Activated CD4-positive, alpha-beta T cell treated with anti-CD3 and anti-CD28 coated beads for 36 hours (primary cell): ENCODE measurements at regions of chr16 and their contacts with region 1.

Region 1: GRCh38 chr16:70380861-70381603 is 34.3 kb downstream of the DDX19A start:
- DNase-seq: peak; percentile 98
- ATAC-seq: peak; percentile 93
- H3K4me3 Mint-ChIP-seq: peak overlapping the region; percentile 86
- H3K27ac Mint-ChIP-seq: peak overlapping the region; percentile 91
- H3K4me1 Mint-ChIP-seq: peaks cover 12% of the 10 kb centered on the region
- H3K27me3 Mint-ChIP-seq: no peaks in the 10 kb centered on the region

Region 2: DNA sequence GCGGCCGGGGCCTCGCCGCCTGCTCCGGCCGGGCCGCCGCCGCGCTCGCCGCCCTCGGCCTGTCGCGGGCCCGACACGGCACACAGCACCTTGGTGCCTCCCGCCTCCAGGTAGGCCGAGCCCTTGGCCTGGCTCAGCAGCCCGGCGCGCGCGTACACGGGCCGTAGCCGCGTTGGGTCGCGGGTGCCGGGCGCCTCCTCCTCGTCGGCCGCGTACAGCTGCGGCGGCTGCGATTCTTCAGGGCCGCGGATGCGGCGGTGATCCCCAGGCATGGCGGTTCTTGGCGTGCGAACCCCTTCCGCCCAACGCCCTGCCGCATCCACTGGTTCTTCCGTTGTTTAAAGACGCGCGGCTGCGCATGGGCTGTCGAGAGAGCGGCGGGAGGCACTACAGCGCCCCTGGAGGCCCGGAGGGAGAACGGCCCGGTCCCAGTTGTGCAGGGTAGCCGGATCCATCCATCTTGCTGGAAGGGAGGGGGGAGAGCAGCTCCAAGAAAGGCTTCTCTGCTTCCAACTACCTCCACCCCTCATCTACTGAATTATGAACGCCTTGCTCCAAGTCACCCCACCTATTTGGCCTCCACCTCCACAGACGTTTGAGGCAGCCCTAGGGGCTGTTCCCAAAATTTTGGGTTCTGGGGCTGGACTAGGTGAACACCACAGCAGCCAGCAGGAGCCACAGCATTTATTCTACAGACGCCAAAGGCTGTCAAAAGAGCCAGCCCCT is 129.2 kb before region 1 on chr16 and contains the start of gene EXOSC6:
- CTCF ChIA-PET with region 1: no interaction called
- POLR2A ChIA-PET with region 1: no interaction called
- intact Hi-C with region 1: loop called in 1 of 2 experiments (anchors 1 kb)
- DNase-seq: peak; percentile 96
- ATAC-seq: peak; percentile 94
- H3K4me3 Mint-ChIP-seq: peak within 1 kb of the TSS; percentile 85
- H3K27ac Mint-ChIP-seq: peak within 1 kb of the TSS; percentile 84
- H3K4me1 Mint-ChIP-seq: peaks cover 16% of the 10 kb centered on the region
- H3K27me3 Mint-ChIP-seq: no peaks in the 10 kb centered on the region
- total RNA-seq, gene EXOSC6: 18.7 to 23.5 TPM

Region 3: DNA sequence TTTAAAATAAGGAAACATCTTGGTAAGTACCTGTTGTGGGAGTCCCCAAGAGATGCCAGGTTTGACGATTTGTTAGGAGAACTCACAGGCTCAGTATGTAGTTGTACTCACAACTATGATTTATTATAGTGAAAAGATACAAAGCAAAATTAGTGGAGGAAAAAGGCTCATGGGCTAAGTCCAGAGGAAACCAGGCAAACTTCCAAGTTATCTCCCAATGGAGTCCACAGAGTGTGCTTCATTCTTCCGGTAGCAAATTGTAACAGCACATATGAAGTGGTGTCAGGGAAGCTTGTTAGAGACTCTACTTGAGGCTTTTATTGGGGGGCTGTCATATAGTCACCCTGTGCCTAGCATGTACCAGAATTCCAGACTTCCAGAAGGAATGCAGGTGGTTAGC is 32.0 kb before region 1 on chr16:
- CTCF ChIA-PET with region 1: no interaction called
- POLR2A ChIA-PET with region 1: interaction called, 27 read pairs
- intact Hi-C with region 1: loop called (anchors 1 kb)
- DNase-seq: no peak
- ATAC-seq: no peak
- H3K4me3 Mint-ChIP-seq: no peak overlapping the region
- H3K27ac Mint-ChIP-seq: no peak overlapping the region
- H3K4me1 Mint-ChIP-seq: peaks cover 36% of the 10 kb centered on the region
- H3K27me3 Mint-ChIP-seq: no peaks in the 10 kb centered on the region

Region 4: DNA sequence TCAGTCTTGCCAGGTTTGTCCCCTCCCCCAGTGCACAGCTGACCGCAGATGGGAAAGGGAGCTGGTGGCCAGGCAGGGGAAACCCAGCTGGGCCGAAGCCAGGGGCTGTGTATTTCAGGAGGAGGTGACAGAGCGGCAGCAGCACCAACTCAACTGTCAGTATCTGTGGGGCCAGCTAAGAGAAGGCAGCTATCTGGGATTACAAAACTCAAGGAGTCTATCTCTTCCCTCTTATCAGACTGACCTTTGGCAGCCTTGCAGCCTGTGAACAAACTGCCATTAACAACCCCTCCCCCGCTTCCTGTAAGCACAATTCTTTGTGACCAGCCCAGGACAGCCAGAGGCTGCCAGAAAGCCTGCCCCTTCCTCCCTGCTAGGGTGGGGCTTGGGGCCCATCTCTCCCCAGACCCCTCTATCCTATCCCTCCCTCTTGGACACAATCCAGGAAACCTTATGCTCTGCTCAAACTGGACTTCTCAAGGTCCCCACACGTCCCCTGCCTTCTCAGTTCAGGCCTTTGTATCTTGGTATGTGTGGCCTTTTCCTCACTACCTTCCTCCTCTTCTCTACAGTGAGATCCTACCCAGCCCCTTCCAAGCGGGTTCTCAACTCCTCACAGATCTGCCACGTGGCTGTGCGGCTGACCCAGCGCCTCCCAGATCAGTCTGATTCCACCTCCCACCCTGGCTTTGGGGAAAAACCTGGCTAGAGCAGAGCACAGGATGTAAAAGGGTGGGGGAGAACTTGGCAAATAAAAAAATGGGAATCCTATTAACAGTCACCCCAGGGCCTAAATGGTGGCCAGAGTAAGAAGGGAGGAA is 47.4 kb after region 1 on chr16:
- CTCF ChIA-PET with region 1: no interaction called
- POLR2A ChIA-PET with region 1: interaction called, 5 read pairs
- intact Hi-C with region 1: loop called in 1 of 2 experiments (anchors 2 kb)
- DNase-seq: peak; percentile 85
- ATAC-seq: peak; percentile 63
- H3K4me3 Mint-ChIP-seq: no peak overlapping the region
- H3K27ac Mint-ChIP-seq: peak overlapping the region; percentile 90
- H3K4me1 Mint-ChIP-seq: peaks cover 57% of the 10 kb centered on the region
- H3K27me3 Mint-ChIP-seq: no peaks in the 10 kb centered on the region

Region 5: DNA sequence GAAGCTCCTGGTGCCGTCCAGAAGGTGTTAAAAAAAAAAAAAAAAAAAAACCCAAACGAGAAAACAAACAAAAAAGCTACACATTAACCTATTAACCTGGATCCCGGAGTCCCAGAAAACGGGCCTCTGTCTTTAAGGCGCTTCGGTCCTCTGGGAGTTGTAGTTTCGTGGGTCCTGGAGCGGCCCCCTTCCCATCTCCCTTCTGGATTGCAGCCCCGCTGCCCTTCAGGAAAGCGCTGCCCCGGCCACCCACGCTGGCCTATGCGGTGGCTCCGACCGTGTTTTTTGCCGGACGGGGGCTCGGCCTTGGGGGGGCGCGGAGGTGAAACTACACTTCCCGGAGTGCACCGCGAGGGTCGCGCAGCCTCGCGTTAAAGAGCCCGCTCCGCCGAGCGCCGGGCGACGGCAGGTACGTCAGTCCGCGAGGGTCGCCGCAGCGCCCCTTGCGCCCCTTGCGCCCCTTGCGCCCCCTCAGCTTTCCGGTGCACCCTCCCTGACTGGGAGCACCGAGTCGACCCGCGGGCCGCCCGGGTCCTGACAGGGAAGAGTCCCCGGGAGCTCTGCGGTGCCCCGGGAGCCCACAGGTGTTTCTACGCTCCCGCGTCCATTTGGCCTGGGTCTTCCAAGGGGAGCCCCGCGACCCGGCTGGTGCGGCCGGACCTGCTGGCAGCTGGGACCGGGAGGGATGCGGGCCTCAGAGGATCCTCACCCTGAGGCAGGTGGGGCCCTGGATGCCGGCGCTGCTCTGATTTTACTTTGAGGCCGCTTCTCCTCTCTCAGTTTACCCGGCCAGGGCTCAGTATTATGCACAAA is 73.4 kb after region 1 on chr16 and contains the start of gene FCSK:
- CTCF ChIA-PET with region 1: interaction called, 8 read pairs
- POLR2A ChIA-PET with region 1: interaction called, 3 read pairs
- intact Hi-C with region 1: loop called (anchors 1 kb)
- DNase-seq: peak; percentile 79
- ATAC-seq: peak; percentile 94
- H3K4me3 Mint-ChIP-seq: peak within 1 kb of the TSS; percentile 85
- H3K27ac Mint-ChIP-seq: peak within 1 kb of the TSS; percentile 88
- H3K4me1 Mint-ChIP-seq: peaks cover 16% of the 10 kb centered on the region
- H3K27me3 Mint-ChIP-seq: no peaks in the 10 kb centered on the region
- total RNA-seq, gene FCSK: 10.3 to 13.4 TPM

Region 6: GRCh38 chr16:71933913-71934695 is 1553.1 kb after region 1 on chr16:
- CTCF ChIA-PET with region 1: no interaction called
- POLR2A ChIA-PET with region 1: no interaction called
- intact Hi-C with region 1: no loop called
- DNase-seq: no peak
- ATAC-seq: peak; percentile 9
- H3K4me3 Mint-ChIP-seq: no peak overlapping the region
- H3K27ac Mint-ChIP-seq: peak overlapping the region; percentile 25
- H3K4me1 Mint-ChIP-seq: peaks cover 10% of the 10 kb centered on the region
- H3K27me3 Mint-ChIP-seq: no peaks in the 10 kb centered on the region